ENCODE measurements at regions of chr9 and their contacts with region 1.

Region 1: GRCh38 chr9:14198841-14199455 is 115.0 kb downstream of the NFIB start:
- DNase-seq: peak; percentile 89

Region 2: GRCh38 chr9:13898957-13899356 is 300.0 kb before region 1 on chr9:
- intact Hi-C with region 1: loop called (anchors 10 kb)
- DNase-seq: no peak

Region 3: DNA sequence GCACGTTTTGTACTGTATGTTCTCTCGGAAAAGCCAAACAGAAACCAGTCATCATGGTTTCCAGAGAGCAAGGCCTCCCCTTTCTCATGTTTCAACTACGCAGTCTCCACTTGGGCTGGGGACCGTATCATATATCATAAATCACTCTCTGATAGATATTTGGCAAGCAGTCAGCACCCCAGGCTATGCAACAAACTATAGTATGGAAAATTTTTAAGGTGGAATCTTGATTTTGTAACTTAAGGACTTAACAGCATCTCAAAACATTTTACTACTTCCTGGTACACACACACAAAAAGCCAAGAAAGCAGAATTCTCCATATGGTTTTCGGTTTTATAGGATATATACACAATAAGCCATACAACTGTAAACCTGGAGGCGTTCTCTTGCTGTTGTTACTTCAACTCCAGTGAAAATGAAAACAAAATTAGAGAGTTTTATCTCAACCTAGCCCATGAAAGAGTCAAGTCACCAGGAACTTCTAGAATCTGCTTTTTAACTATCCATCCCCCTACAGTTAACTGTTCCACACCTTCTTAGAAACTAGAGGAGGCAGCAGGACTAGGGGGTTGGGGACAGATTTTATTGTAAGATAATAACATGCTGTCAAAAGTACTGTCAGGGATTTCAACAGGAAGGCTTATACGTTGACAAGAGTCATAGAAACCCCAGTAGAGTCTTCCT is 168.4 kb before region 1 on chr9:
- intact Hi-C with region 1: loop called (anchors 10 kb)
- DNase-seq: no peak

Region 4: DNA sequence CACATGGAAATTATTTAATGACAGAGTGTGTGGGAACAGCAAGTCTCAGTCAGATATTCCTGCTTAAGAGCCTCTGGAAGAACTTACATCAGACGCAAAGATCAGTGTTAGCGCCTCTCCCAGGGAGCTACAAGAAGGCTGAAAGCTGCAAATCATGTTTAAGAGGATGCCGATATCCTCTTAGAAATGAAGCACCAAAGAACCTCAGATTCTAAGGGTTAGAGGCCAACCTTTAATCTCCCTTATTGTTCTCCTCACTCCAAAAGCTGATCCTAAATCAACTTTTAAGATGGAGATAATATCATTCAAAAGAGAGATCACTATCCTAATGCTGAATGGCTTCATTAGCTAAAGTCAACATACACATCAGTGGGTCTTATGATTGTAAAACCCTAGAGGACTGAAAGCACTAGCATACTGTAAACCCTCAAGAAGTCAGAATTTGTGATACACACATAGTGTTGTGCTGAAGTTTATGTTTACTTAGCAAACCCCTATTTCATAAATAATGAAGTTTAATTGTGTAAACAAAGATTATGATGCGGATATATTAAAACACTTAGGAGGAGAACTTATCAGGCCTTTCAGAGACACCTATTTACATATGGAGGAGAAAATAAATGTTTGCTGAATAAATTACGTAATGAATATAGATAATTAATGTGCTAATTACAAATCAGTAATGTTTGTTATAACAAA is 45.5 kb before region 1 on chr9:
- intact Hi-C with region 1: loop called (anchors 5 kb)
- DNase-seq: no peak

Region 5: GRCh38 chr9:15032860-15033259 is 833.9 kb after region 1 on chr9:
- intact Hi-C with region 1: no loop called
- DNase-seq: no peak